Panc1 (cell line): ENCODE measurements at regions of chr3 and their contacts with region 1.

Region 1: DNA sequence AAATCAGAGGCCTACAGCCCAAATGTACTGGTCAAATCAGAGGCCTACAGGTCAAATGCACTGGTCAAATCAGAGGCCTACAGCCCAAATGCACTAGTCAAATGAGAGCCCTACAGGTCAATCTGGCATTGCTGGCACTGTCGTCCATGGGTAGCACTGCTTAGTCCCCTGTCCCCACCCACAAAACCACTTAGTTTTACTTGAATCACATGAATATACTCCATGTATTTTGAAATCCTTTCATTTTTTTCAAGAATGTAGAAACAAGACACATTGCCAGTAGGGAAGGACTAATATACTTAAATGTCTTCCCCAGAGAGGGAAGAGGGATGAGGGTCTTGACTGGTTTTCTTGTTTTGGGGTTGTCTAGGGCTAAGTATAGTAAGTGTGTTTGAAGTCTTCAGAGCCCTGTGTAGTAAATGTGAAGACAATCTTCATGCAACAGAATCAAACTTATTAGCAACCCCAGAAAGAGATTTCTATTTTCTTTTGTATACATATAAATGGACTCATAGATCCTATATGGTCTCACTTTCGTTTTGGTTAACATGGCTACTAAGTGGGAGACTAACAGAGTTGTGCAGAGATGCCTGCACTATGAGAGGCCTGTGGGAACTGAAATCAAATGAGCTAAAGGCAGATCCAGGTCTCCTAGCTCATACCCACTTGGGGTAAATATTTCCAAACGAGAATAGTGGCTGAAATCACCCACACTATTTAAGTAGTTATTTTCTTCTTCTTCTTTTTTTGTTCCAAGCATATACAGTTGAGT is 38.3 kb upstream of the DCUN1D1 start:
- DNase-seq: no peak
- ATAC-seq: no peak
- H3K4me3 ChIP-seq: no peak overlapping the region
- H3K27ac ChIP-seq: no peak overlapping the region
- H3K4me1 ChIP-seq: no peaks in the 10 kb centered on the region
- H3K27me3 ChIP-seq: no peaks in the 10 kb centered on the region
- CTCF ChIP-seq: no peak

Region 2: DNA sequence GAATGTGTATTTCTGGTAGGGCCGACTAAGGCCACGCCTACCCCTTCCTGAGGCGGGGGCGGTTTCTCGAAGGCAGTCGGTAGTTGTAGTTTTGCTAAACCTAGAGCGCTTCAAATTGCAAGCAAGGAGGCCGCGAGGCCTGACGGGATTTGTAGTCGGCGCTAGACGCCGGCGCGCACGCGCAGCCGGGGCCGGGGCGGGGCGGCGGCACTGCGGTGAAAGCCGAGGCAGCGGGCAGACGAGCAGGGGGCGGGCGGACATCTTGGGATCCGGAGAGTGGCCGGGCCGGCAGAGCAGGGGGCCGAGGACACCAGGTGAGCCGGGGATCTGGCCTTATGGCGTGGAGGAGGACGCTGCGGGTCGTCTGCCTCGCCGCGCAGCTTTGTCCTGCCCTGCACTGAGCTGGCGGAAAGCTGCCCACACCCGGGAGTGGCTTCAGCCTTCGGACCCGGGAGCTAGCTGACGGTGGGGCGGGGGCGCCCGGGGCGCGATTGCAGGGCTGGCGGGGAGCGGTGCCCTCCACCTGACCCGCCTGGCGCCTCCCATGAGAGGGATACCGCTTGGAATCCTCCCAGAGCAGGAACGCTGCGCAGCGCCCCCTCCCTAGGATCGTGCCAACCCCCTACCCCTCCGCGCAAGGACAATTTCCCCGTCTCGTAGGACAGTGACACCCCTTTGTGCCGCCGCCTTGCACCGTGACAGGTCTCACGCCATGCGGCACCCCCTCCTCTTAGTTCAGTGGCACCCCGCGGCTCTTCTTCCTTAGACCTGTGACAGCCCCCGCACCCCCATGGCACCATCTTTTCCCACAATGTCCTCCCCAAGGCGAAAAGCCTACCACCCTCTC is 1156.3 kb after region 1 on chr3 and contains the start of gene AP2M1:
- CTCF ChIA-PET with region 1: no interaction called
- POLR2A ChIA-PET with region 1: no interaction called
- in situ Hi-C with region 1: no loop called
- intact Hi-C with region 1: loop called (anchors 5 kb)
- DNase-seq: peak; percentile 94
- ATAC-seq: peak; percentile 93
- H3K4me3 ChIP-seq: peak within 1 kb of the TSS; percentile 80 to 86
- H3K27ac ChIP-seq: peak within 1 kb of the TSS; percentile 88
- H3K4me1 ChIP-seq: peaks cover 18% of the 10 kb centered on the region
- H3K27me3 ChIP-seq: no peaks in the 10 kb centered on the region
- CTCF ChIP-seq: no peak
- total RNA-seq, gene AP2M1: 335 TPM